Right ventricle myocardium inferior (tissue), 1 donor: ENCODE measurements at regions of chr18 and their contacts with region 1.

Region 1: GRCh38 chr18:267688-268552 is at the start of gene THOC1:
- DNase-seq: peak; percentile 97
- ATAC-seq: peak; percentile 98
- total RNA-seq, gene THOC1: 12.7 TPM

Region 2: GRCh38 chr18:158128-159036 is 109.5 kb before region 1 on chr18 and contains the start of gene USP14:
- intact Hi-C with region 1: loop called (anchors 5 kb)
- DNase-seq: peak; percentile 98
- ATAC-seq: peak; percentile 98
- total RNA-seq, gene USP14: 48.7 TPM

Region 3: GRCh38 chr18:323253-323622 is 55.3 kb after region 1 on chr18:
- intact Hi-C with region 1: loop called (anchors 10 kb)
- DNase-seq: no peak
- ATAC-seq: peak; percentile 77